Breast epithelium (tissue), 4 donors: ENCODE measurements at regions of chr7 and their contacts with region 1.

Region 1: DNA sequence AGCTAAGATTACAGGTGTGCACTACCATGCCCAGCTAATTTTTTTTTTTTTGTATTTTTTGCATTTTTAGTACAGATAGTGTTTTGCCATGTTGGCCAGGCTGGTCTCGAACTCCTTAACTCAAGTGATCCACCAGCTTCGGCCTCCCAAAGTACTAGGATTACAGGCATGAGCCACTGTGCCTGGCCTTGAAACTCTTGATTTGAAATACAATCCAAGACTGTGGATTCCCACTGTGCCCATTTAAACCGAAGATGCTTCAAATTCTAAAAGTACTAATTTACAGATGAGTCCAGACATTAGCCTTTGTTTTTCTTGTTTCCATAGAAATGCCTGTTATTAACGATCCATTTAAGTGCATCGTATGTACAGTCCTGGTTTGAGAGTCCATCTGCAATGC is 130.9 kb downstream of the CACNA2D1 start:
- DNase-seq: no peak
- H3K4me3 ChIP-seq: no peak overlapping the region
- H3K27ac ChIP-seq: no peak overlapping the region
- H3K4me1 ChIP-seq: no peaks in the 10 kb centered on the region
- H3K27me3 ChIP-seq: no peaks in the 10 kb centered on the region
- CTCF ChIP-seq: no peak
- POLR2A ChIP-seq: no peak

Region 2: DNA sequence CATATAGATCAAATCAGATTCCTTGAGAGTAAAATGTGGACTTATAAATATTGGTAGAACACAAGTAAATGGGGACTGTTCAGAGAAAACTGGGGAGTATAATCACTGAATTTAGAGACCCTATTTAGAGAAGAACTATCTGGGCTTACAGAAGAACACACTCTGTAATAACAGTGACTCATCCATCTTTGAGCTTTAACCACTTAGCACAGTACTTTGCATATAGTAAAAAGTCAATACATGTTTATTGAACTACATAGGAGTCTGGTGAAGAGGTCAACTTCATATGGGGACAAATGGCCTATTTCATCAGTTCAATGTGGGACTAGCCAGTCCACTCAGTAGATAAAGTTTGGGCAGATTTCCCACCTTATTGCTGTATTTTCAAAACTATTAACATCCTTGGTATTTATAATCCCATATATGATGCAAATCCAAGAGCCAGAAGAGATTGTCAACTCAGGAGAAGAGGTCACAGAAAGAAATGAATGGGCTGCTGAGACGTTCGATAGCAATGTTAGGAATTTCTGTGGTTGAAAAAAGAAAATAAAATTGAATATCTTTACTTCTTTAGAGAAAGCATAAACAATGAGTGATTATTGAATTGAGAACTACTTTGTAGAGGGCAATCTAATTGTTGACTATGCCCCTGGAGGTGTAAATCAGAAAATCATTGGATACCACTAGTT is 250.2 kb after region 1 on chr7:
- intact Hi-C with region 1: loop called (anchors 5 kb)
- DNase-seq: no peak
- H3K4me3 ChIP-seq: no peak overlapping the region
- H3K27ac ChIP-seq: no peak overlapping the region
- H3K4me1 ChIP-seq: no peaks in the 10 kb centered on the region
- H3K27me3 ChIP-seq: no peaks in the 10 kb centered on the region
- CTCF ChIP-seq: no peak
- POLR2A ChIP-seq: no peak